ENCODE measurements at regions of chr20 and their contacts with region 1.

Region 1: GRCh38 chr20:41738604-41739206 is 120.5 kb upstream of the CHD6 start:
- DNase-seq: peak; percentile 57 to 79 (median 64)
- ATAC-seq: peak; percentile 97
- H3K4me3 ChIP-seq: no peak overlapping the region
- H3K27ac ChIP-seq: no peak overlapping the region
- H3K4me1 ChIP-seq: no peaks in the 10 kb centered on the region; a peak in 1 of 5 replicates
- H3K27me3 ChIP-seq: no peaks in the 10 kb centered on the region
- CTCF ChIP-seq: peak; percentile 85 to 94 (median 93)
- EP300 ChIP-seq: no peak
- POLR2A ChIP-seq: no peak
- RAD21 ChIP-seq: peak; percentile 80 to 85

Region 2: DNA sequence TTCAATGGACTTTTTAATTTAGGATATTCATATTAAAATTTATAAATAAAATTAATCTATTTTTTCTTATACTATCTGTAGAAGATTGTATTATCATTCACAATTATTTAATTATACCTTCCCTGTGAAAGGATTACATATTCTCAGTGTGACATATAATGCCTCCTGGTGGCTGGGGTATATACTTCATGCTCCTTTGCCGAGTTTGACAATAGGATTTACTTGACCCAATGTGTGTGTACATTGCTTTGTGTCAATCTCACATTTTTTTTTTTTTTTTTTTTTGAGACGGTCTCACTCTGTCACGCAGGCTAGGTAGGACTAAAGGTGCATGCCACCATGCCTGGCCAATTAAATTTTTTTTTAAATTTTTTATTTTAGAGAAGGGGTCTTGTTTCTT is 109.5 kb after region 1 on chr20:
- CTCF ChIA-PET with region 1: no interaction called
- POLR2A ChIA-PET with region 1: no interaction called
- in situ Hi-C with region 1: no loop called
- intact Hi-C with region 1: loop called (anchors 2 kb)
- DNase-seq: peak; percentile 14 to 24 (median 19)
- ATAC-seq: peak; percentile 66
- H3K4me3 ChIP-seq: no peak overlapping the region
- H3K27ac ChIP-seq: no peak overlapping the region
- H3K4me1 ChIP-seq: no peaks in the 10 kb centered on the region
- H3K27me3 ChIP-seq: no peaks in the 10 kb centered on the region
- CTCF ChIP-seq: peak; percentile 16 to 48 (median 26); a peak in 3 of 6 replicates
- EP300 ChIP-seq: no peak
- POLR2A ChIP-seq: no peak
- RAD21 ChIP-seq: peak in 1 of 2 experiments; percentile 38; a peak in 2 of 4 replicates

Region 3: DNA sequence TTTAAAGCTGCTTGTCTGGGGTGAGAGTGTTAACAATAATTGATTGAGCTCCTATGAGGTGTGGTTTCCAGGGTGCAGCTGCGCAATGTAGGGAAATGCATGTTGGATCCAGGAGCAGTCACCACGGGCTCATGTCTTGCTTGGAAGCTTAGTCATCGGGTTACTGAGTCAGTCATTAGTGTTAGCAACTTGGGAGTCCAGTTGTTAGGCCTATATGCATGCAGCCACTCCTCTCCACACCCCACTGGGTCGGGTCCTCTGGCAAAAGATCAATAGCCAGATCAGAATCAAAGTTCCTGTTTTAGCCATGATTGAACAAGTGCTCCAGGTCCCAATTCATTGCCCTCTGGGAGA is 151.1 kb after region 1 on chr20:
- CTCF ChIA-PET with region 1: no interaction called
- POLR2A ChIA-PET with region 1: no interaction called
- in situ Hi-C with region 1: no loop called
- intact Hi-C with region 1: loop called (anchors 5 kb)
- DNase-seq: no peak
- ATAC-seq: no peak
- H3K4me3 ChIP-seq: no peak overlapping the region
- H3K27ac ChIP-seq: no peak overlapping the region
- H3K4me1 ChIP-seq: no peaks in the 10 kb centered on the region
- H3K27me3 ChIP-seq: peaks cover 0 to 18% of the 10 kb centered on the region in 2 experiments; a peak in 2 of 5 replicates
- CTCF ChIP-seq: no peak
- EP300 ChIP-seq: no peak
- POLR2A ChIP-seq: no peak
- RAD21 ChIP-seq: no peak